Ascending aorta (tissue), 2 donors: ENCODE measurements at regions of chr5 and their contacts with region 1.

Region 1: GRCh38 chr5:150778517-150779396 is at the start of gene SMIM3:
- DNase-seq: peak; percentile 39 to 92
- H3K4me3 ChIP-seq: peak within 1 kb of the TSS; percentile 68 to 88
- H3K27ac ChIP-seq: peak within 1 kb of the TSS; percentile 97
- H3K4me1 ChIP-seq: peaks cover 26 to 39% of the 10 kb centered on the region in 2 donors
- H3K27me3 ChIP-seq: no peaks in the 10 kb centered on the region
- CTCF ChIP-seq: peak; percentile 14 to 48 (median 35)
- total RNA-seq, gene SMIM3: 52.4 TPM

Region 2: DNA sequence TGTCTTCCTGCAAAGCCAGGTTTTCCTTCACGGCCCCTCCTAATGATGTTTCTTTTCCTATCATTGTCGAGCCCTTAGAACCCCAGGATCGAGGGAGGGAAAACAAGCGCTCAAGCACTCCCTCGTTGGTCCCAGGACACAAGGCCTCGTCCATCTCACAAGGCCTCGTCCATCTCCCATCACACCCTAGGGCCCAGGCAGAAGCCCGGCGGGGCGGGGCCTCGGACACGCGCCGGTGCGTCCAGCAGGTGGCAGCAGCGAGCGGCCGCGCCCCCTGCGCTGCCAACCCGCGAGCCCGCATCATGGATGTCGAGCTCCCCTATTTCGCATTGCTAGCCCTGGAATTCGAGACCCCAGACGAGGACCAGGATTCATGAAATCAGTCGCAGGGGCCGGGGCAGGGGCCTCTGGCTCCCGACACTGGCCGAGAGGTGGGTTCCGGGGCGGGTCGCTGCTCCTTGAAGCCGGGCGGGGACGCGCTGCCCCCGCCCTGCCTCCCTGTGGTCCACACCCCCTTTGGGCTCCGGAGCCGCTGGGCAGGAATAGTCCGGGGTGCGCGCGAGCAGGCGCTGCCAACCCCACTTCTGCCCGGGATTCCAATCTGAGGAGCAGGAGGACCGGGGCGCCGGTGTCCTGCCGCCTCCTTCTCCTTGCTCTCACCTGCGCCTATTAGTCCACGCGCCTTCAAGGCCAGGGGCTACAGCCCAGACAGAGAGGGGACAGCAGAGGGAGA is 1637.4 kb before region 1 on chr5 and contains the start of gene ABLIM3:
- intact Hi-C with region 1: no loop called
- DNase-seq: peak; percentile 18 to 87
- H3K4me3 ChIP-seq: peak within 1 kb of the TSS; percentile 77 to 88
- H3K27ac ChIP-seq: peak within 1 kb of the TSS; percentile 62 to 73
- H3K4me1 ChIP-seq: peaks cover 7 to 13% of the 10 kb centered on the region in 2 donors
- H3K27me3 ChIP-seq: no peaks in the 10 kb centered on the region
- CTCF ChIP-seq: peak; percentile 85 to 94 (median 90)
- total RNA-seq, gene ABLIM3: 25.8 TPM

Region 3: DNA sequence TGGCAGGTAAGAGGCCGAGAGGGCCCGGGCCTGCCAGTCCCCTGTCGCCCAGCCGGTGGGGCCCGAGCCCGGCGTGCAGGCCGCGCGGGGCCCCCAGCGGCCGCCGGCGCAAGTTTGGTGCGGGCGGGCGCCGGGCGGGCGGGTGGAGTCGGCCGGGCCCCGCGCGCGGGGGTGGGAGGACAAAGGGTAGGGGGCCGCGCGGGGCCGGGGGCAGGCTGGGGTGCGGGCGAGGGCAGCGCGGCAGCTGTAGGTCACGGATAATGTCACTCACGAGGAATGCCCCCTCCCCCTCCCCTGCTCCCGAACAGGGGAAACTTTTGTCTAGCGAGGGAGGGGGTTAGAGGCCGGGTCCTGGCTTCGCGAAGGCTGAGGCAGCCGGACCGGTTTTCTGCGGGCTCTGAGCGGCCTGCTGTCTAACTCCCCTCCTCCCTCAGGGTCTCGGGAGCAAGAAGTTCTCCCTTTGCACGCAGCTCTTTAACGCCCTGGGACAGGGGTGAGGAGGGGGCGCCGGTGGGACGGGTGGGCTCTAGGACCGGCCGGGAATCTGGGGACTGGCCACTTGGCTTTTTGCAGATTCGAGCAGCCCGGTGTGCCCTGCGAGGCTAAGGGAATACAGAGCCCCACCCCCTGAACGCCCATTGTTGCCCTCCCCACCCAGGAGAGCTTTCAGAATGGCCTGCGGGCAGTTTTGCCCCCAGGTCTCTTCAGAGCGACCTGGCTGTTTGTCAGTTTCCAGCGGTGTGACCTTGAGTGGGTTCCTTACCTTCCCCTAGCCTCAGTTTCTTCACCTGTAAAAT is 292.2 kb before region 1 on chr5:
- intact Hi-C with region 1: loop called (anchors 10 kb)
- DNase-seq: peak in 1 of 2 donors; percentile 80
- H3K4me3 ChIP-seq: peak overlapping the region; percentile 87 to 98
- H3K27ac ChIP-seq: peak overlapping the region; percentile 95 to 97
- H3K4me1 ChIP-seq: peaks cover 44 to 50% of the 10 kb centered on the region in 2 donors
- H3K27me3 ChIP-seq: no peaks in the 10 kb centered on the region
- CTCF ChIP-seq: no peak

Region 4: GRCh38 chr5:150758531-150759333 is 20.0 kb before region 1 on chr5 and contains the start of gene DCTN4:
- intact Hi-C with region 1: loop called (anchors 1 kb)
- DNase-seq: peak; percentile 93 to 98
- H3K4me3 ChIP-seq: peak within 1 kb of the TSS; percentile 73 to 74
- H3K27ac ChIP-seq: peak within 1 kb of the TSS; percentile 93 to 95
- H3K4me1 ChIP-seq: peaks cover 4 to 30% of the 10 kb centered on the region in 2 donors
- H3K27me3 ChIP-seq: no peaks in the 10 kb centered on the region
- CTCF ChIP-seq: peak in 1 of 3 experiments; percentile 9
- total RNA-seq, gene DCTN4: 28.1 TPM

Region 5: DNA sequence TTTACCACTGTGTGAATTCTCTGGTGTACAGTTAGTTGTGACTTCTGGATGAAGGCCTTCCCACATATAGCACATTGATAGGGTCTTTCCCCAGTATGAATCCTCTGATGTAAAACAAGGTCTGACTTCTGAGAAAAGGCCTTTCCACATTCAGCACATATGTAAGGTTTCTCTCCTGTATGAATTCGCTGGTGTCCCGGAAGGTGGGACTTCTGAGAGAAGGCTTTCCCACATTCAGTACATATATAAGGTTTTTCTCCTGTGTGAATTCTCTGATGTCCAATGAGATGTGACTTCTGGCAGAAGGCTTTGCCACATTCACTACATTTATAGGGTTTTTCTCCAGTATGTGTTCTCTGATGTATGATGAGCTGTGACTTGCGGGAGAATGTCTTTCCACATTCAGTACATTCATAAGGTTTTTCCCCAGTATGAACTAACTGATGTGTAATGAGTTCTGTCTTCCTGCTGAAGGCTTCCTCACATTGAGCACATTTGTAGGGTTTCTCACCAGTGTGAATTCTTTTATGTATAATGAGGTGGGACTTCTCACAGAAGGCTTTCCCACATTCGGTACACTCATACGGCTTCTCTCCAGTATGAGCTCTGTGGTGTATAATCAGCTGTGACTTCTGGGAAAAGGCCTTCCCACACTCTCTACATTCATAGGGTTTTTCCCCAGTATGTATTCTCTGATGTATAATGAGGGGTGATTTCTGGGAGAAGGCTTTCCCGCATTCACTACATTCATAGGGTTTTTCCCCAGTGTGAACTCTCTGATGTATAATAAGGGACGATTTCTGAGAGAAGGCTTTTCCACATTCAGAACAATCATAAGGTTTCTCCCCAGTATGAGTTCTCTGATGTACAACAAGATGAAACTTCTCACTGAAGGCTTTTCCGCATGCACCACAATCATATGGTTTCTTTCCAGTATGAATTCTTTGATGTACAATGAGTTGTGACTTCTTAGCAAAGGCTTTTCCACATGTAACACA is 117.0 kb after region 1 on chr5:
- intact Hi-C with region 1: no loop called
- DNase-seq: no peak
- H3K4me3 ChIP-seq: peak overlapping the region in 1 of 2 donors; percentile 25
- H3K27ac ChIP-seq: no peak overlapping the region
- H3K4me1 ChIP-seq: no peaks in the 10 kb centered on the region
- H3K27me3 ChIP-seq: no peaks in the 10 kb centered on the region
- CTCF ChIP-seq: no peak

Region 6: GRCh38 chr5:151020304-151021110 is 241.8 kb after region 1 on chr5 and contains the start of gene GPX3:
- intact Hi-C with region 1: loop called (anchors 5 kb)
- DNase-seq: peak; percentile 92 to 98
- H3K4me3 ChIP-seq: peak within 1 kb of the TSS; percentile 76 to 87
- H3K27ac ChIP-seq: peak within 1 kb of the TSS; percentile 91 to 93
- H3K4me1 ChIP-seq: peaks cover 23 to 36% of the 10 kb centered on the region in 2 donors
- H3K27me3 ChIP-seq: no peaks in the 10 kb centered on the region
- CTCF ChIP-seq: no peak
- total RNA-seq, gene GPX3: 2,056 TPM